MCF 10A (cell line): ENCODE measurements at regions of chr3 and their contacts with region 1.

Region 1: DNA sequence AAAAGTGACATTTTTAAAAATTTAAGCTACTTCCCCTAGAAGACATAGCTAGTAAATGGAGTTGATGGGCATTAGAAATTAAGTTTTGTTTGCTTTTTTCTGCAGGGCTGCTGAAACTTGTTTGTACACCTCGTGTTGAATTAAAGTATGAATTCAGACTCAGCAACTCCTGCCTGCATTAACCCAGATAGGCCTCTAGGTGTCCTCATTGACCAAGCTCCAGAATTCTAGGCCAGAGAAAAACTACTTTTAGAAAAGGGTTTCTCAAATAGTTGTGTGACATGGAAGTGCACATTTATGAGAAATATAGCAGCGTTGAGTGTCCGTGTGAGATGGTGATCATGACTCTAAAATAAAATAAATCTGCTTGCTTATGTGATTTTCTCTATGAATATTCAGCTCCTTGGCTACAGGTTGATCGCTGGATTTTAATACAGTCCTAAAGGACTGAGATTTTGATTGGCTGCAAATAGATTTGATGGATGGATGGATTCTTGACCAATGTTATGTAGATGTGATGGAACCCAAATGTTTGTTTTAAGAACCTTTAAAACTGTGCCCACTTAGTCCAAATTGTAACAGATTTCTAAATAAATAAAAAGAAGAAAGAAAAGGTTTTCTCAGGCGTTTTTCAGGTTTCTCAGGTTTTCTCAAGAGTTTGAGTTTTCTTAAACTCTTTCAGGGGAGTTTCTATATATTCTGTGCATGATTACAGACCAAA is 39.4 kb upstream of the LMOD3 start:
- DNase-seq: peak; percentile 65
- H3K4me3 Mint-ChIP-seq: no peak overlapping the region
- H3K27ac Mint-ChIP-seq: no peak overlapping the region
- H3K4me1 Mint-ChIP-seq: no peaks in the 10 kb centered on the region
- H3K27me3 Mint-ChIP-seq: no peaks in the 10 kb centered on the region
- CTCF ChIP-seq: peak; percentile 88

Region 2: DNA sequence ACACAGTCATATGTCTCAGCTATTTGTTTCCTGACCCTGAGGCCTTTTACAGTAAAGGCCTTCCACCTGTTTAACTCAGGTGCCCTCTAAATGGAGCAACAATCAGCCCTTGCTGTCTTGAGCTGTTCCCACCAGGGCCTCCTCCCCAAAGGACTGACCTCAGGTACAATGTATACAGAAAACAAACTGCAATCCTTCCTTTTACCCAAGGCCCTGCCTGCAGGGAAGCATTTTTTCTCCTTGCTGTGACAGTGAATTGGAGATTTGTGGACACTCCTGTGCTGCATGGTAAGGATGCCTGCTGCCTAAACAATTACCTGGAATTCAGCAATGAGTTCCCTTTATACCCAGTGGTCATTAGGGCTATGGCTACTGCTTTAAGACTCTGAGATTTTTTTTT is 508.4 kb before region 1 on chr3:
- CTCF ChIA-PET with region 1: no interaction called
- POLR2A ChIA-PET with region 1: no interaction called
- intact Hi-C with region 1: no loop called
- DNase-seq: no peak
- H3K4me3 Mint-ChIP-seq: no peak overlapping the region
- H3K27ac Mint-ChIP-seq: no peak overlapping the region
- H3K4me1 Mint-ChIP-seq: no peaks in the 10 kb centered on the region
- H3K27me3 Mint-ChIP-seq: no peaks in the 10 kb centered on the region
- CTCF ChIP-seq: no peak

Region 3: DNA sequence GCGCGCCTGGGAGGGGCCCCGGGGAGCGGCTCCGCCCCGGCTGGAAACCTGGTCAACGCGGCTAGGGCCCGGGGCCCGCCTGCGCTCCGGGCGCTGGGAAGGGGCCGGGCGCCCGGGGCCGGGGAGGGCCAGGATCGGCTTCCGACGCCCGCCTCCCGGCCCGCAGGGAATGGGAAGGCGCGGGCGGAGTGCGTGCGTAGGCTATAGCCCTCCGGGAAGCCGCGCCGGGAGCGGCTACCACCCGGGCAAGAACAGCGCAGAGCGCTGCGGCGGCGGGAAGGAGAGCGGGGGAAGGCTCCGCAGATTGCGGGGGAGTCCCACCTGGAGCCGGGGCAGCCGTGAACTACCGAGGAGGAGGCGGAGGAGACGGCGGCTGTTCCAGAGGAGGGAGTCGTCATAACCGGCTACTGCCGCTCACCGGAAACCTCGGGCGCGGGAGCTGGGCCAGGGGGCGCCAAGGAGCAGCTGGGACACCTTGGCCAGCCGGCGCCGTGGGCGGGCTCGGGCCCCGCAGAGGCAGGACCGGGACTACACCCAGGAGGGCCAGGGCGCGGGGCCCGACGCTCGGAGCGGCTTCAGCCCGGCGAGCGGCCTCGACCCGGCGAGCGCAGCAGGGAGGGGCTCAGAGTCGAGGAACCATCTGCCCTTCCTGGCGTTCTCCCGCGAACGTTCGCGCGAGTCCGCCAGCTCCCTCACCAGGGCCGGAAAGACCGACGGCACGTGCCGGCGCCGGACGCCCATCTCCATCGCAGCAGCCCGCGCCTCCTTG is 148.3 kb before region 1 on chr3 and contains the start of gene EOGT:
- CTCF ChIA-PET with region 1: no interaction called
- POLR2A ChIA-PET with region 1: no interaction called
- intact Hi-C with region 1: no loop called
- DNase-seq: peak; percentile 89
- H3K4me3 Mint-ChIP-seq: peak within 1 kb of the TSS; percentile 89
- H3K27ac Mint-ChIP-seq: peak within 1 kb of the TSS; percentile 91
- H3K4me1 Mint-ChIP-seq: peaks cover 32% of the 10 kb centered on the region
- H3K27me3 Mint-ChIP-seq: no peaks in the 10 kb centered on the region
- CTCF ChIP-seq: peak; percentile 67
- total RNA-seq, gene EOGT: 40.9 and 41.7 TPM in 2 replicates

Region 4: GRCh38 chr3:69120879-69121464 is 40.8 kb before region 1 on chr3:
- CTCF ChIA-PET with region 1: interaction called, 71 read pairs
- POLR2A ChIA-PET with region 1: interaction called, 4 read pairs
- intact Hi-C with region 1: loop called (anchors 1 kb)
- DNase-seq: peak; percentile 87
- H3K4me3 Mint-ChIP-seq: no peak overlapping the region
- H3K27ac Mint-ChIP-seq: no peak overlapping the region
- H3K4me1 Mint-ChIP-seq: no peaks in the 10 kb centered on the region
- H3K27me3 Mint-ChIP-seq: no peaks in the 10 kb centered on the region
- CTCF ChIP-seq: peak; percentile 88

Region 5: DNA sequence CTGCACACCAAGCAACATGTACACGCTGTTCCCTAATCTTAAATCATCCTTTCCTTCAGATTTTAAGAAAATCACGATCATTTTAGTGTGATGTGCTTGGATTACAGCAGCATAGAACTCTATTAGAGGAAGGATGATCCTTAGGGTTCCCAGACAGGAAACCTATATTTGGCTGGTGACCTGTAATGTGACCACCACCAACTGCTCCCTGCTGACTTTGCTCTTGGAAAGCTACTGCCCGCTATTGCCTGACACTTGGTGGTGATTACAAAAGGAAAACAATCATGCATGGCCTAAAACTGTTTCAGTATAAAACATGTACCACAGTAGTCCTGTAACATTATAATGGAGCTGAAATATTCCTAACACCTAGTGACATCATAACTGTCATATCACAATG is 12.2 kb before region 1 on chr3:
- CTCF ChIA-PET with region 1: interaction called, 13 read pairs
- POLR2A ChIA-PET with region 1: no interaction called
- intact Hi-C with region 1: no loop called
- DNase-seq: no peak
- H3K4me3 Mint-ChIP-seq: no peak overlapping the region
- H3K27ac Mint-ChIP-seq: no peak overlapping the region
- H3K4me1 Mint-ChIP-seq: peaks cover 2% of the 10 kb centered on the region
- H3K27me3 Mint-ChIP-seq: peaks cover 16% of the 10 kb centered on the region
- CTCF ChIP-seq: no peak

Region 6: DNA sequence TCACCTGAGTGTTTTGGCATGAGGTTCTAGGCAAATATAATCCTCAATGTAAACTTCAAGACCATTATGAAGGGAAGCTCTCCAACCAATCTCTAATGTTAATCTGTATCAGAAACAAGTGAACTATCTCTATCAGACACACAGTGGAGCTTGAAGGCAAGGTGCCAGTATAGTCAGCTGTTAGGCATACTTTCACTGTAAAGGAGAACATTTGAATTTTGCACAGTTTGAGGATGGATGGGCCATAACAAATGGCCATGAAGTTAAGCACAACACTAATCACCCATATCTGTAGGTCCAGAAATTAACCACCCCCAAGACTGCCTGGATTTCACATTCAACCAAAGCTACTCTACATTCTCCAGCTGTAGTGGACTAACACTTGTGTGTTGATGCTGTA is 29.8 kb after region 1 on chr3:
- CTCF ChIA-PET with region 1: interaction called, 12 read pairs
- POLR2A ChIA-PET with region 1: no interaction called
- intact Hi-C with region 1: no loop called
- DNase-seq: no peak
- H3K4me3 Mint-ChIP-seq: no peak overlapping the region
- H3K27ac Mint-ChIP-seq: no peak overlapping the region
- H3K4me1 Mint-ChIP-seq: no peaks in the 10 kb centered on the region
- H3K27me3 Mint-ChIP-seq: no peaks in the 10 kb centered on the region
- CTCF ChIP-seq: no peak

Region 7: GRCh38 chr3:69273896-69274295 is 112.1 kb after region 1 on chr3:
- CTCF ChIA-PET with region 1: interaction called, 10 read pairs
- POLR2A ChIA-PET with region 1: no interaction called
- intact Hi-C with region 1: no loop called
- DNase-seq: peak; percentile 17
- H3K4me3 Mint-ChIP-seq: no peak overlapping the region
- H3K27ac Mint-ChIP-seq: no peak overlapping the region
- H3K4me1 Mint-ChIP-seq: peaks cover 16% of the 10 kb centered on the region
- H3K27me3 Mint-ChIP-seq: no peaks in the 10 kb centered on the region
- CTCF ChIP-seq: no peak

Region 8: GRCh38 chr3:69306239-69307185 is 144.8 kb after region 1 on chr3:
- CTCF ChIA-PET with region 1: interaction called, 332 read pairs
- POLR2A ChIA-PET with region 1: interaction called, 5 read pairs
- intact Hi-C with region 1: loop called (anchors 1 kb)
- DNase-seq: peak; percentile 92
- H3K4me3 Mint-ChIP-seq: no peak overlapping the region
- H3K27ac Mint-ChIP-seq: peak overlapping the region; percentile 59
- H3K4me1 Mint-ChIP-seq: peaks cover 16% of the 10 kb centered on the region
- H3K27me3 Mint-ChIP-seq: no peaks in the 10 kb centered on the region
- CTCF ChIP-seq: peak; percentile 85

Region 9: GRCh38 chr3:69671082-69671952 is 509.6 kb after region 1 on chr3:
- CTCF ChIA-PET with region 1: interaction called, 96 read pairs
- POLR2A ChIA-PET with region 1: interaction called, 3 read pairs
- intact Hi-C with region 1: loop called (anchors 1 kb)
- DNase-seq: peak; percentile 67
- H3K4me3 Mint-ChIP-seq: no peak overlapping the region
- H3K27ac Mint-ChIP-seq: no peak overlapping the region
- H3K4me1 Mint-ChIP-seq: peaks cover 14% of the 10 kb centered on the region
- H3K27me3 Mint-ChIP-seq: no peaks in the 10 kb centered on the region
- CTCF ChIP-seq: peak; percentile 70